ENCODE measurements at regions of chr9 and their contacts with region 1.

Region 1: DNA sequence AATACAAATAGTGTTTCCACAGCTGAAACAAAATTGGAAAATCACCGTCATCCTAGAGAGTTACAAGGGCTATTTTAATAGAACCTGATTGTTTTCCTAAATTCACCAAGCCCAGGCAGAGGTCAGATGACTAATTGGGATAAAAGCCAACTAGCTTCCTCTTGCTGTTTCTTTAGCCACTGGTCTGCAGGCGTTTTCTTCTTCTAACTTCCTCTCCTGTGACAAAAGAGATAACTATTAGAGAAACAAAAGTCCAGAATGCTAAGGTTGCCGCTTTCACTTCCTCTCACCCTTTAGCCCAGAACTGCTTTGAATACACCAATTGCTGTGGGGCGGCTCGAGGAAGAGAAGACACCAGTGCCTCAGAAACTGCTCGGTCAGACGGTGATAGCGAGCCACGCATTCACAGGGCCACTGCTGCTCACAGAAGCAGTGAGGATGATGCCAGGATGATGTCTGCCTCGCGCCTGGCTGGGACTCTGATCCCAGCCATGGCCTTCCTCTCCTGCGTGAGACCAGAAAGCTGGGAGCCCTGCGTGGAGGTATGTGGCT is at the start of gene TLR4:
- DNase-seq: peak; percentile 42
- ATAC-seq: peak; percentile 97
- H3K4me3 Mint-ChIP-seq: peak within 1 kb of the TSS; percentile 82
- H3K27ac Mint-ChIP-seq: peak within 1 kb of the TSS; percentile 84
- H3K4me1 Mint-ChIP-seq: peaks cover 40% of the 10 kb centered on the region
- H3K27me3 Mint-ChIP-seq: no peaks in the 10 kb centered on the region
- CTCF ChIP-seq: no peak
- total RNA-seq, gene TLR4: 2.0 and 2.2 TPM in 2 replicates

Region 2: GRCh38 chr9:117644133-117644931 is 59.8 kb before region 1 on chr9:
- CTCF ChIA-PET with region 1: no interaction called
- POLR2A ChIA-PET with region 1: no interaction called
- intact Hi-C with region 1: loop called (anchors 1 kb)
- DNase-seq: peak; percentile 51
- ATAC-seq: peak; percentile 69
- H3K4me3 Mint-ChIP-seq: no peak overlapping the region
- H3K27ac Mint-ChIP-seq: no peak overlapping the region
- H3K4me1 Mint-ChIP-seq: peaks cover 11% of the 10 kb centered on the region
- H3K27me3 Mint-ChIP-seq: peaks cover 20% of the 10 kb centered on the region
- CTCF ChIP-seq: peak; percentile 40

Region 3: DNA sequence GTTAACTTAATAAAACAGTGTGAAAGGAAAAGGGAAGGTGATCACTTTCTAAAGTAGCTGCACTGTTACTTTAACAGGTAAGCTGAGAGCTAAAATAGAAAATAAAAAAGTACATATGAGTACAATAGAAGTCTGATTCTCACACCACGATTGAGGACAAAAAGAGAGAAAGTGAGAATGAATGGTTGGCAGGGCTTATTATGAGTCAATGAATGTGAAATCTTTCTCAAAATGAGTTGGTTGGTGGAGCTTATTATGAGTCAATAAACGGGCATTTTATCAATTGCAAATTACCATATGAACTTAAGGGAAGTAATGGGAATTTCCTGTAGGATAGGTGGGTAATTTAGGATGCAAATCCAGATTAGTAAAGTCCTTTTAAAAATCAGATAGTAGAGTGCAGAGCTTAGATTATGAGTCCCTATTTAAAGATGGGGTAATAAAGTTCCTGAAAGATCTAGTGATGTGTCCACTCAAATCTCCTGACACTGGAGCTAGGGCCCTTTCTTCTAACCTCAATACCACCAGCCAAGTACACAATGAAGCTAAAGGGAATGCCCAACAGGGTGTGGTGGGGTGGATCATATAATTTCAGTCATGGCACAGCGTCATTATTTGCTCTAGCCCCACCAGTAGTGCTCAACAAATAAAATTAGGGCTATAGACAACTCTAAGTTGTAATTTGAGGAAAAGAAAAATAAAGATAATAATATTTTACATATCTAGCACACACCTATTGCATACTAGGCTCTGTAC is 21.0 kb before region 1 on chr9:
- CTCF ChIA-PET with region 1: interaction called, 3 read pairs
- POLR2A ChIA-PET with region 1: no interaction called
- intact Hi-C with region 1: loop called (anchors 2 kb)
- DNase-seq: no peak
- ATAC-seq: no peak
- H3K4me3 Mint-ChIP-seq: no peak overlapping the region
- H3K27ac Mint-ChIP-seq: no peak overlapping the region
- H3K4me1 Mint-ChIP-seq: peaks cover 10% of the 10 kb centered on the region
- H3K27me3 Mint-ChIP-seq: peaks cover 20% of the 10 kb centered on the region
- CTCF ChIP-seq: no peak

Region 4: DNA sequence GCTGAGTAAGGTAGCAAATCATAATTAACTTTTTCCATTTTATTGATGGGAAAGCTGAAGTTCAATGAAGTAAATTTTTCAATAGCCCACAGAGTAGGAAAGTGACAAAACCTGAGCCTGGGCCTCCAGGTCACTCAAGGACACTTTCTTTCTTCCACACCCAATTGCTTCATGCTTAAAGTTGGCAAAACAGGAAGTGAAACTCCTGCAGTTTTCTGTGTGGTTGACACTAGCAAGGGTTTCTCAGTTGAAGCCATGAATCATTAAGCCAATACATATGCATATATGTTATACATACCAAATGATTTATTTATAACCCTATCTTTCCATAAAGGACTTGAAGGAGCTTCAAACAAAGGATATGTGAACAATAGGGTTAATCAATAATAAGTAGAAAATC is 14.0 kb after region 1 on chr9:
- CTCF ChIA-PET with region 1: no interaction called
- POLR2A ChIA-PET with region 1: no interaction called
- intact Hi-C with region 1: loop called (anchors 1 kb)
- DNase-seq: no peak
- ATAC-seq: peak; percentile 91
- H3K4me3 Mint-ChIP-seq: peak overlapping the region; percentile 46
- H3K27ac Mint-ChIP-seq: no peak overlapping the region
- H3K4me1 Mint-ChIP-seq: peaks cover 24% of the 10 kb centered on the region
- H3K27me3 Mint-ChIP-seq: peaks cover 9% of the 10 kb centered on the region
- CTCF ChIP-seq: no peak

Region 5: GRCh38 chr9:117782931-117783788 is 79.1 kb after region 1 on chr9:
- CTCF ChIA-PET with region 1: no interaction called
- POLR2A ChIA-PET with region 1: interaction called, 3 read pairs
- intact Hi-C with region 1: loop called (anchors 1 kb)
- DNase-seq: peak; percentile 34
- ATAC-seq: peak; percentile 60
- H3K4me3 Mint-ChIP-seq: no peak overlapping the region
- H3K27ac Mint-ChIP-seq: no peak overlapping the region
- H3K4me1 Mint-ChIP-seq: no peaks in the 10 kb centered on the region
- H3K27me3 Mint-ChIP-seq: no peaks in the 10 kb centered on the region
- CTCF ChIP-seq: peak; percentile 87

Region 6: DNA sequence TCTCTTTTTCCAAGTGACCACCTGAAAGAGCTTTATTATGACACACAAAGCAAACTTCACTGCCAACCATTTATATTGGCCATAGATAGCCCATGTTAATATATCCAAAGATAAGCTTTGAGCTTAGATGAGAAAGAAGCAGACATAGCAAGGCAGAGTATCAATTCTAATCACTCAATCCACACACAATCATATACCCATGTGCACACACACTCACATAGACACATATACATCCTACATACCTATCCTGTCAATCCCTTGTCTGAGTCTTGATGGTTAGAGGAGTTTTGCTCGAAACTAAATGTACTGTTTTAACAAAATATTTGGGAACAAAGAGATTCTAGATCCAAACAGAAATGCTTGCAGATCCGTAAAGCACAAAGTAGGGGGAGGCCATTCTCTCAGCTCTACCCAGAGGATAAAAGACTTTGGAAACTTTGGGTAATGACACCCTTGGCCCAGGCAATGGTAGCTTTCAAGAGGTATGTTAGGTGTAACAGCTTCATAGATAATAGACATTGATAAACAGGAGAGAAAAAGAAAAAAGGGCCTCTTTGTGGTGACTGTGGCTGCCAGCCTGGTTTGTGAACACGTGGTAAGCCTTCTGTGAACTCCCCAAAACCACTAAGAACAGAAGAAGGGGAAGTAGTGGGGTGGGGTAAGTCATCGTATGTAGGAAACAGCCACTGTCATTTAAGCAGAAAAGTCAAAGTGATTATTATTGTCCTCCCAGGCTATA is 121.7 kb after region 1 on chr9:
- CTCF ChIA-PET with region 1: no interaction called
- POLR2A ChIA-PET with region 1: interaction called, 3 read pairs
- intact Hi-C with region 1: loop called (anchors 5 kb)
- DNase-seq: peak; percentile 26
- ATAC-seq: peak; percentile 96
- H3K4me3 Mint-ChIP-seq: peak overlapping the region; percentile 53
- H3K27ac Mint-ChIP-seq: peak overlapping the region; percentile 22
- H3K4me1 Mint-ChIP-seq: peaks cover 32% of the 10 kb centered on the region
- H3K27me3 Mint-ChIP-seq: peaks cover 15% of the 10 kb centered on the region
- CTCF ChIP-seq: no peak

Region 7: GRCh38 chr9:117936185-117937130 is 232.4 kb after region 1 on chr9:
- CTCF ChIA-PET with region 1: no interaction called
- POLR2A ChIA-PET with region 1: no interaction called
- intact Hi-C with region 1: loop called (anchors 5 kb)
- DNase-seq: no peak
- ATAC-seq: peak; percentile 95
- H3K4me3 Mint-ChIP-seq: peak overlapping the region; percentile 11
- H3K27ac Mint-ChIP-seq: peak overlapping the region; percentile 28
- H3K4me1 Mint-ChIP-seq: peaks cover 24% of the 10 kb centered on the region
- H3K27me3 Mint-ChIP-seq: no peaks in the 10 kb centered on the region
- CTCF ChIP-seq: no peak